ENCODE measurements at regions of chr1 and their contacts with region 1.

Region 1: DNA sequence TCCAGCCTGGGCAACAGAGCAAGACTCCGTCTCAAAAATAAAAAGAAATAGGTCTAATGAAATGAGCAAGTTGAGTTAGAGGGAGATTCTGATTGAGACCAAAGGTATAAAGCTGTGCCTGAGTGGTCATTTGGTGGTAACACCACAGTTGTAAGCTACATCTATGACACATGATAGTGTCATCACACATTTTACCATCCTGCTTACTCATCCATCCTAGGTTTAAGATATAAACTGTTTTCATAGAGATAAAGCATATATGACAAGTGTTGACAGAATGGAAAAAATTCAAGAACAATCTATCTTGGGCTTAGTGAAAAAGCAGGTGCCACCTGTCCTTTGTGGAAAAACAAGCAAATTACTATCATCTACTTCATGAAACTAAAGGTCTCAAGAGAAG is 7.1 kb upstream of the CFAP141 start:
- DNase-seq: no peak
- ATAC-seq: peak; percentile 91
- H3K4me3 Mint-ChIP-seq: no peak overlapping the region
- H3K27ac Mint-ChIP-seq: peak overlapping the region; percentile 90
- H3K4me1 Mint-ChIP-seq: peaks cover 63% of the 10 kb centered on the region
- H3K27me3 Mint-ChIP-seq: no peaks in the 10 kb centered on the region

Region 2: GRCh38 chr1:154193821-154194220 is 19.5 kb before region 1 on chr1:
- CTCF ChIA-PET with region 1: interaction called, 10 read pairs
- POLR2A ChIA-PET with region 1: no interaction called
- intact Hi-C with region 1: no loop called
- DNase-seq: no peak
- ATAC-seq: no peak
- H3K4me3 Mint-ChIP-seq: no peak overlapping the region
- H3K27ac Mint-ChIP-seq: no peak overlapping the region
- H3K4me1 Mint-ChIP-seq: peaks cover 3% of the 10 kb centered on the region
- H3K27me3 Mint-ChIP-seq: peaks cover 9% of the 10 kb centered on the region